Prostate gland (tissue), 2 donors: ENCODE measurements at regions of chr2 and their contacts with region 1.

Region 1: GRCh38 chr2:30711646-30712085 is 95.6 kb downstream of the CAPN13 start:
- DNase-seq: peak; percentile 76
- H3K4me3 ChIP-seq: no peak overlapping the region
- H3K27ac ChIP-seq: no peak overlapping the region
- H3K4me1 ChIP-seq: no peaks in the 10 kb centered on the region
- H3K27me3 ChIP-seq: no peaks in the 10 kb centered on the region
- CTCF ChIP-seq: peak; percentile 84 to 99 (median 96)
- POLR2A ChIP-seq: no peak

Region 2: GRCh38 chr2:30165050-30165520 is 546.6 kb before region 1 on chr2:
- intact Hi-C with region 1: loop called (anchors 2 kb)
- DNase-seq: peak; percentile 46
- H3K4me3 ChIP-seq: no peak overlapping the region
- H3K27ac ChIP-seq: no peak overlapping the region
- H3K4me1 ChIP-seq: no peaks in the 10 kb centered on the region
- H3K27me3 ChIP-seq: no peaks in the 10 kb centered on the region
- CTCF ChIP-seq: peak; percentile 61 to 79 (median 71)
- POLR2A ChIP-seq: no peak

Region 3: DNA sequence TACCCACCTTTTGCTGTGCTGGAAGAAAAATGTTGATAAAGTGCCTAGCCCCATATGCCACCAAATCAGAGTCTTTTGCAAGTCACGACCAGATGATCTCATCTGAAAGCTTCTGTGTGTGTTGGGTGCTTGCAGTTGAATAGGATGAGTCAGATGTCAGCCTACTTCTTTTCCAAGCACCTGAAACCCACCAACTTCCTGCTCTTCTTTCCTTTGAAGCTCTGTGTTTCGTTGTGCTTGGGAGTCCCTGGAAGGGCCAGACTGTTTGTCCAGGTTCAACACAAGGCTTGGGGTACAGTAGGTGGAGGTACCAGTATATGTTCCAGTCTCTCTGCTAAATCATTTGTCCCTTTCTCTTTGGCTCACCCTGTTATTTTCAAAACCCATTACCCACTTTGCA is 301.4 kb before region 1 on chr2:
- intact Hi-C with region 1: loop called (anchors 10 kb)
- DNase-seq: no peak
- H3K4me3 ChIP-seq: no peak overlapping the region
- H3K27ac ChIP-seq: no peak overlapping the region
- H3K4me1 ChIP-seq: no peaks in the 10 kb centered on the region
- H3K27me3 ChIP-seq: no peaks in the 10 kb centered on the region
- CTCF ChIP-seq: no peak
- POLR2A ChIP-seq: no peak

Region 4: DNA sequence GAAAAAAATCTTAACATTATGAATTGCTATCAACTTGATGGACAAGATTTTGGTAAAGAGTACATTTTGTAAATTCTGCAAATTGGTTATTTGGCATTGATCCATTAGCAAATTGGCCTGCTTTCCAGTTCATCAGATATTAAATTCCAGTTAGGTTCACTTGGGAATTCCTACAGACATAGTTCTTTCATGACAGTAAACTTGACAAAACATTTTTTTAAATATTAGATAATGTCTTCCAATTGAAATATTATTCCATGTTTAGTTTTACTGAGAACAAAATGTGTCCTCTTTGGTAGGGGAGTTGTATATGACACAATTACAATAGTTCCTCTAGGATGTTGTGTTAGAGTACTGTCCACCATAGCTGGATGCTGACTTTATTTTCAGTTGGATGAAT is 122.7 kb before region 1 on chr2:
- intact Hi-C with region 1: no loop called
- DNase-seq: no peak
- H3K4me3 ChIP-seq: no peak overlapping the region
- H3K27ac ChIP-seq: no peak overlapping the region
- H3K4me1 ChIP-seq: no peaks in the 10 kb centered on the region
- H3K27me3 ChIP-seq: no peaks in the 10 kb centered on the region
- CTCF ChIP-seq: no peak
- POLR2A ChIP-seq: no peak

Region 5: GRCh38 chr2:30631051-30631671 is 80.5 kb before region 1 on chr2:
- intact Hi-C with region 1: no loop called
- DNase-seq: no peak
- H3K4me3 ChIP-seq: no peak overlapping the region
- H3K27ac ChIP-seq: no peak overlapping the region
- H3K4me1 ChIP-seq: no peaks in the 10 kb centered on the region
- H3K27me3 ChIP-seq: no peaks in the 10 kb centered on the region
- CTCF ChIP-seq: no peak
- POLR2A ChIP-seq: no peak

Region 6: GRCh38 chr2:30738164-30738911 is 26.7 kb after region 1 on chr2:
- intact Hi-C with region 1: no loop called
- DNase-seq: no peak
- H3K4me3 ChIP-seq: no peak overlapping the region
- H3K27ac ChIP-seq: no peak overlapping the region
- H3K4me1 ChIP-seq: no peaks in the 10 kb centered on the region
- H3K27me3 ChIP-seq: no peaks in the 10 kb centered on the region
- CTCF ChIP-seq: no peak
- POLR2A ChIP-seq: no peak

Region 7: GRCh38 chr2:31170071-31170698 is 458.5 kb after region 1 on chr2:
- intact Hi-C with region 1: loop called (anchors 2 kb)
- DNase-seq: peak; percentile 41
- H3K4me3 ChIP-seq: no peak overlapping the region
- H3K27ac ChIP-seq: no peak overlapping the region
- H3K4me1 ChIP-seq: no peaks in the 10 kb centered on the region
- H3K27me3 ChIP-seq: no peaks in the 10 kb centered on the region
- CTCF ChIP-seq: peak; percentile 58 to 92 (median 85)
- POLR2A ChIP-seq: no peak

Region 8: GRCh38 chr2:31831585-31831984 is 1119.9 kb after region 1 on chr2:
- intact Hi-C with region 1: loop called (anchors 10 kb)
- DNase-seq: no peak
- H3K4me3 ChIP-seq: no peak overlapping the region
- H3K27ac ChIP-seq: no peak overlapping the region
- H3K4me1 ChIP-seq: no peaks in the 10 kb centered on the region
- H3K27me3 ChIP-seq: no peaks in the 10 kb centered on the region
- CTCF ChIP-seq: no peak
- POLR2A ChIP-seq: no peak